Lower lobe of right lung (tissue), 2 donors: ENCODE measurements at regions of chr19 and their contacts with region 1.

Region 1: GRCh38 chr19:18007044-18007916 is 690 bp upstream of the ARRDC2 start:
- DNase-seq: peak; percentile 90
- ATAC-seq: peak; percentile 90 to 92
- H3K4me3 ChIP-seq: peak overlapping the region; percentile 72
- H3K27ac ChIP-seq: peak overlapping the region; percentile 86
- H3K4me1 ChIP-seq: peaks cover 39% of the 10 kb centered on the region
- H3K27me3 ChIP-seq: no peaks in the 10 kb centered on the region
- CTCF ChIP-seq: peak; percentile 99

Region 2: DNA sequence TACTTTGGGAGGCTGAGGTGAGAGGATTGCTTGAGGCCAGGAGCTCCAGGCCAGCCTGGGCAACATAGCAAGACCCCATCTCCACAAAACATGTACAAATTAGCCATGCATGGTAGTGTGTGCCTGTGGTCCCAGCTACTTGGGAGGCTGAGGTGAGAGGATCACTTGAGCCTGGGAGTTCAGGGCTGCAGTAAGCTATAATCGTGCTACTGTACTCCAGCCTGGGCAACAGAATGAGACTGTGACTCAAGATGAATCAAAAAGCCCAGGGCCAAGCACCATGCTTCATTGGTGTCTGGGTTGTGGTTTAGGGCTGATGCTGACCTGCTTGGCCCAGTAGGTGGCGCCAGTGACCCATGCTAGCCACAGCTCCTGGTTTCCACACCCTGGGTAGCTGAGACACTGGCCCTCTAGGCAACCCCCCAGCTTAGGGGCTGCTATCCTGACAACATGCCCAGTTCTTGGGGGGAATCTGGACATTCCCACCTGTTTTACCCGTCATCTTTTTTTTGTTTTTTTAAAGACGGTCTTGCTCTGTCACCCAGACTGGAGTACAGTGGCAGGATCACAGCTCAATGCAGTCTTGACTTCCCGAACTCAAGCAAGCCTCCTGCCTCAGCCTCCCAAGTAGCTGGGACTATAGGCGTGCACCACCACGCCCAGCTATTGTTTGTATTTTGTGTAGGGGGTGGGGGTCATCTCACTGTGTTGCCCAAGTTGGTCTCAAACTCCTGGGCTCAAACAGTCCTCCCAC is 69.0 kb before region 1 on chr19:
- intact Hi-C with region 1: no loop called
- DNase-seq: peak; percentile 84
- ATAC-seq: peak; percentile 76 to 88
- H3K4me3 ChIP-seq: no peak overlapping the region
- H3K27ac ChIP-seq: no peak overlapping the region
- H3K4me1 ChIP-seq: peaks cover 13% of the 10 kb centered on the region
- H3K27me3 ChIP-seq: no peaks in the 10 kb centered on the region
- CTCF ChIP-seq: peak; percentile 95

Region 3: DNA sequence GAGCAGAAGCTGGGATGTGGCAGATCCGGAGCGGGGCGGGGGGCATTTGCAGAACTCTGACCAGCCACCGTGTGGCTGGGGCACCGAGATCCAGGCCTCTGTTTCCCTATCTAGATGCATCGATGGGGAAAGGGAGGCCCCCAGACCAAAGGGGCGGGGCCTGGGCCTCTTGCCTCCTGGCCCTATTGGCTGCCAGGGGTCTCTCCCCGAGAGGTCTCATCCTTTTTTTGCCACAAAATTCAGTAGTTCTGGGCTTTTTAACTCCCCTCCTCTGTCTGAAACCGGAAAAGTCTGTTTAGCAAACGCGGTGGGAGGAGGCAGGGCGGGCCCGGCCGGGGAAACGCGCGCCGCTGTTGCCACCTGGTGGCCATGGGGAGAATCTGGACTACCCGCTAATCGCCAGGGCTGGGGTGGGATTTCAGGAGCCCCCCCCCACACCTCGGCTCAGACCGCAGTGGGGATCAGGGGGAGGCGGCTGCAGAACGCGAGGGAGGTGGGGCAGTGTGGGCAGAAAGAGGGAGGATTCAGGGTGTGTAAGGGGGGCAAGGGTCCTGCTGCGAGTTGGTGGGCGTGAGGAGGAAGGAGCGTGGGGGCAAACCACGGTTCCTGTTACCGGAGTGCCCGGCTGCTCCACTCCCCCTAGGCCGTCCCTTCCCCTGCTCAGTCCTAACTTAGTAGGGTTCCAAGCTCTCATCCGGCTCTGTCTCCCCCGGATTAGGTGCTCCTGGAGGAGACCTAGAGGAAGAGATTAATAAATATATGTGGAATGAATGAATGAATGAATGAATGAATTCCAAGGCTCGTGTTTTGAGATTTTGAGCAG is 51.1 kb after region 1 on chr19:
- intact Hi-C with region 1: loop called (anchors 5 kb)
- DNase-seq: peak; percentile 86
- ATAC-seq: peak; percentile 93 to 94
- H3K4me3 ChIP-seq: peak overlapping the region; percentile 43
- H3K27ac ChIP-seq: peak overlapping the region; percentile 82
- H3K4me1 ChIP-seq: peaks cover 12% of the 10 kb centered on the region
- H3K27me3 ChIP-seq: no peaks in the 10 kb centered on the region
- CTCF ChIP-seq: peak; percentile 94